ENCODE measurements at regions of chr13 and their contacts with region 1.

Region 1: GRCh38 chr13:94549232-94550061 is 46.5 kb downstream of the TGDS start:
- DNase-seq: peak; percentile 88
- H3K4me3 ChIP-seq: peak overlapping the region; percentile 75 to 82 (median 78)
- H3K27ac ChIP-seq: peak overlapping the region; percentile 58
- H3K4me1 ChIP-seq: peaks cover 8% of the 10 kb centered on the region
- H3K27me3 ChIP-seq: no peaks in the 10 kb centered on the region
- CTCF ChIP-seq: no peak

Region 2: GRCh38 chr13:94595950-94596574 is 46.6 kb after region 1 on chr13 and contains the start of gene TGDS:
- CTCF ChIA-PET with region 1: no interaction called
- dilution Hi-C with region 1: no loop called
- in situ Hi-C with region 1: no loop called
- intact Hi-C with region 1: loop called (anchors 1 kb)
- DNase-seq: peak; percentile 91
- H3K4me3 ChIP-seq: peak within 1 kb of the TSS; percentile 67 to 97 (median 93)
- H3K27ac ChIP-seq: peak within 1 kb of the TSS; percentile 80
- H3K4me1 ChIP-seq: peaks cover 10% of the 10 kb centered on the region
- H3K27me3 ChIP-seq: no peaks in the 10 kb centered on the region
- CTCF ChIP-seq: no peak
- total RNA-seq, gene TGDS: 12.0 to 12.1 TPM

Region 3: GRCh38 chr13:94601446-94602431 is 52.3 kb after region 1 on chr13 and contains the start of gene GPR180:
- CTCF ChIA-PET with region 1: no interaction called
- dilution Hi-C with region 1: no loop called
- in situ Hi-C with region 1: no loop called
- intact Hi-C with region 1: loop called (anchors 1 kb)
- DNase-seq: peak; percentile 99
- H3K4me3 ChIP-seq: peak within 1 kb of the TSS; percentile 73 to 93 (median 89)
- H3K27ac ChIP-seq: peak within 1 kb of the TSS; percentile 61
- H3K4me1 ChIP-seq: peaks cover 4% of the 10 kb centered on the region
- H3K27me3 ChIP-seq: no peaks in the 10 kb centered on the region
- CTCF ChIP-seq: no peak
- total RNA-seq, gene GPR180: 9.7 to 11.5 TPM

Measured in mammary epithelial cell (primary cell).